PC-3 (cell line): ENCODE measurements at regions of chr11 and their contacts with region 1.

Region 1: DNA sequence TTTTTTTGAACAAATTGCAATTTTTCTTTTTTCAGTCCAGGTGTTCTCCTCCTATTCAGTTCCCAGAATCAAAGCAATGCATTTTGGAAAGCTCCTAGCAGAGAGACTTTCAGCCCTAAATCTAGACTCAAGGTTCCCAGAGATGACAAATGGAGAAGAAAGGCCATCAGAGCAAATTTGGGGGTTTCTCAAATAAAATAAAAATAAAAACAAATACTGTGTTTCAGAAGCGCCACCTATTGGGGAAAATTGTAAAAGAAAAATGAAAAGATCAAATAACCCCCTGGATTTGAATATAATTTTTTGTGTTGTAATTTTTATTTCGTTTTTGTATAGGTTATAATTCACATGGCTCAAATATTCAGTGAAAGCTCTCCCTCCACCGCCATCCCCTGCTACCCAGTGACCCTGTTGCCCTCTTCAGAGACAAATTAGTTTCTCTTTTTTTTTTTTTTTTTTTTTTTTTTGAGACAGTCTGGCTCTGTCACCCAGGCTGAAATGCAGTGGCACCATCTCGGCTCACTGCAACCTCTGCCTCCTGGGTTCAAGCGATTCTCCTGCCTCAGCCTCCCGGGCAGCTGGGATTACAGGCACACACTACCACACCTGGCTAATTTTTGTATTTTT is 6.2 kb upstream of the UBE4A start:
- DNase-seq: peak; percentile 67
- ATAC-seq: no peak
- H3K4me3 ChIP-seq: no peak overlapping the region
- H3K27ac ChIP-seq: no peak overlapping the region
- H3K4me1 ChIP-seq: no peaks in the 10 kb centered on the region
- H3K27me3 ChIP-seq: peaks cover 24% of the 10 kb centered on the region; the same call in 1 of the 2 replicates
- CTCF ChIP-seq: peak; percentile 86

Region 2: DNA sequence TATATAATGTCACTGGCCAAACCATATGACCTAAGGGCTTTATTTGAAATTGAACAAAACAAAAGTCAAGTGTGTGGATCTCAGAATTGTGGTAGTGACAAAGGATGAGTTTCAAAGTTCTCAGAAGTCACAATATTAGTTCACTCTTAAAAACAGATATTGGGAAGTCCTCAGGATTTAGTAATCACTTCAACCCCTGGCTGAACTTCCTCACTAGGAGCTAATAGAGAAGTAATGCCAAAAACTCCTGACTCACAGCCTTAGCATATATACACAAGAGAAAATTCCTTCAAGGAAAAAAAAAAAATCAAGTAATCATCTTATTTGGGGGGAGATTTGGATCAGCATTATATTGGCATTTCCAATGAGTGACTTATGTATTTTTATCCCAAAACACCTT is 1440.2 kb before region 1 on chr11:
- CTCF ChIA-PET with region 1: no interaction called
- POLR2A ChIA-PET with region 1: no interaction called
- intact Hi-C with region 1: no loop called
- DNase-seq: peak; percentile 91
- ATAC-seq: peak; percentile 86
- H3K4me3 ChIP-seq: no peak overlapping the region
- H3K27ac ChIP-seq: peak overlapping the region; percentile 60
- H3K4me1 ChIP-seq: peaks cover 20% of the 10 kb centered on the region
- H3K27me3 ChIP-seq: no peaks in the 10 kb centered on the region
- CTCF ChIP-seq: no peak

Region 3: GRCh38 chr11:118295834-118296454 is 57.3 kb before region 1 on chr11:
- CTCF ChIA-PET with region 1: interaction called, 9 read pairs
- POLR2A ChIA-PET with region 1: interaction called, 5 read pairs
- intact Hi-C with region 1: loop called (anchors 1 kb)
- DNase-seq: peak; percentile 89
- ATAC-seq: peak; percentile 68
- H3K4me3 ChIP-seq: no peak overlapping the region
- H3K27ac ChIP-seq: no peak overlapping the region
- H3K4me1 ChIP-seq: peaks cover 17% of the 10 kb centered on the region
- H3K27me3 ChIP-seq: peaks cover 6% of the 10 kb centered on the region
- CTCF ChIP-seq: peak; percentile 95